ENCODE measurements at regions of chr10 and their contacts with region 1.

Region 1: DNA sequence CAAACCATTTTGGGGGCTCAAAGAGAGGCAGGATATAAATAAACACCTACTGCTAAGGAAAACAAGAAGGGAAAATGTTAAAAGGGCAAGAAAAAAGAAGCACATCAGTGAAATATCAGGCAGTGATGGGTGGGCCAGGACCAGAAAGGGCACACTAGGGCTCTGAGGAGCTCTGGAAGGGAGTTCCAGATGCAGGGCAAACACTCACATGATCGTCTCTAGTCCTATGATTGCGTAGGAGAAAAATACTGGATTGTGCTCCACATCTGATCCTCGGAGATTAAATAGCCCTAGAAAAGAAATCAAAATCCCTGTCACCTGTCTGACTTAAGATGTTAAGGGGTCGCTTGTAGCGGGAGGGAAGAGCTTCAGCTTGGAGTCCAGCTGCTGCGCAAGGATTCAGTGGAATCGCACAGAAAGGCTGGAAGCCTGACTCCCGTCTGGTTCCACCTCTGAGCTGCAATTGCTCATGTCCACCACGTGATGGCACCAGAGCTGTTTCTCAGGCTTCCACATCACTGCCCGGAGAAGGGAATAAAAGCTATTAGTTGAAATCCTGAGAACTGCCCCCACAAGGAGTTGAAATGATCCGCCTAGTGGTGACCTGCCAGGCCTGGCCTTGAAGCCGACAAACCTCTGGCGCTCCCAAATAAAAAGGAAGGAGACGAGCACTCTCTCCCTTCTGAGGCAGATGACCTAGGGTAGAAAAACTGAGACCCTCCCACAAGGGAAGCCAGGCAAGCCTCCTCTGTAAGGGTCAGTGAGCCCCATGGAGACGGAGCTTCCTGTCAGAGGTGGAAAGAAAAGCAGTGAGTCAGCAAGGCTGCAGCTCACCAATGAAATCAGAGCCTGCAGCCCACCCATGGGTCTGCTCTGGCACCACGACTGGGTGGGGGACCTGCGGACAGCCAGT is 39.2 kb downstream of the XPNPEP1 start:
- DNase-seq: peak; percentile 37 to 81 (median 76)
- H3K4me3 ChIP-seq: peak overlapping the region; percentile 19 to 65 (median 50)
- H3K27ac ChIP-seq: peak overlapping the region; percentile 28 to 94 (median 85)
- H3K27me3 ChIP-seq: no peaks in the 10 kb centered on the region
- CTCF ChIP-seq: peak; percentile 81 to 99 (median 97)

Region 2: GRCh38 chr10:109743574-109743973 is 140.5 kb before region 1 on chr10:
- intact Hi-C with region 1: no loop called
- DNase-seq: no peak
- H3K4me3 ChIP-seq: no peak overlapping the region
- H3K27ac ChIP-seq: no peak overlapping the region
- H3K27me3 ChIP-seq: no peaks in the 10 kb centered on the region
- CTCF ChIP-seq: no peak

Region 3: DNA sequence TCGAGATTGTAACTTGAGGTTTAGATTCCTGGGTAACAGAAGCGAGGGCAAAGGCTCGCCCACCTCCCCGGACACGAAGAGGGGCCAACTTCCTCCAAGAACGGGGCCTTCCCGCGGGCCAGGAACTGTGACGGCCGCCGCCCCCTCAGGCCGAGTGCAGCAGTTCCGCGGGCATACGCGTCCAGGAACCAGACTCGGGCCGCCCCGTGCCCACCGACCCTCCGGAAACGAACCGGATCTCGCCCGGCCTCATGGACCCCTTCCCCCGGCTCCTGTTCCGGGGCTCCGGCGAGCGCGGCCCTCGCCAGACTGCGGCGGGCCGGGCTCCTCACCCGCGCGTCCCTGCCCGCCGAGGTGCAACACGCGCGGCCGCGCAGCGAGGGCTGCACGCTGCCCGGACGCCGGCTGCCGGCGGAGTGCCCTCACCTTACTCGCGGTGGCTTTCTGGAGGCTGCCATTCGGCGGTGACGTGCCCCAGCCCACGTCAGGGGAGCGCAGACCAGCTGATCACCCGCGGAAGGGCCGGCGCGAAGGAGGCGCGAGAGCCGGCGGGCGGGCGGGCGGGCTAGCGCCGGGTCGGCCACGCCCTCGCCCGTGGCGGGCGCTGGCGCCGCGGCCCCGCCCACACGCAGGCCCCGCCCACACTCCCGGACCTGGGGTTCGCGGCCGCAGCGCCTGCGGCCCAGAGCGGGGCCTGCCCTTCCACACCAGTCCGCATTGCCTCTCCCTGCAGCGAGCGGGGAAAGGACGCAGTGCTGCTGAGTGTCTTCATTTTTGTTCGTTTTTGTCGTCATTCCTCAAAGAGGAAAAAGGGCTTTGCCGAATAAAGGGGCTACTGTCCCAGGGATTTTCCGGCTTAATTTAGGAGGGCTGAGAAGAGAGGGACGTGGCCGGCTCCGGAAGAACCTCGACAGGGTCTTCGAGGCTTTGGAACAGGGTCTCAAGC is 39.1 kb after region 1 on chr10 and contains the start of gene XPNPEP1:
- intact Hi-C with region 1: loop called (anchors 2 to 5 kb)
- DNase-seq: peak; percentile 79 to 94 (median 88)
- H3K4me3 ChIP-seq: peak within 1 kb of the TSS; percentile 58 to 100 (median 92)
- H3K27ac ChIP-seq: peak within 1 kb of the TSS; percentile 49 to 96 (median 92)
- H3K27me3 ChIP-seq: no peaks in the 10 kb centered on the region
- CTCF ChIP-seq: peak in 5 of 56 donors; percentile 8 to 29 (median 20)
- total RNA-seq, gene XPNPEP1: 42.7 to 96.7 (median 63.5) TPM

Region 4: DNA sequence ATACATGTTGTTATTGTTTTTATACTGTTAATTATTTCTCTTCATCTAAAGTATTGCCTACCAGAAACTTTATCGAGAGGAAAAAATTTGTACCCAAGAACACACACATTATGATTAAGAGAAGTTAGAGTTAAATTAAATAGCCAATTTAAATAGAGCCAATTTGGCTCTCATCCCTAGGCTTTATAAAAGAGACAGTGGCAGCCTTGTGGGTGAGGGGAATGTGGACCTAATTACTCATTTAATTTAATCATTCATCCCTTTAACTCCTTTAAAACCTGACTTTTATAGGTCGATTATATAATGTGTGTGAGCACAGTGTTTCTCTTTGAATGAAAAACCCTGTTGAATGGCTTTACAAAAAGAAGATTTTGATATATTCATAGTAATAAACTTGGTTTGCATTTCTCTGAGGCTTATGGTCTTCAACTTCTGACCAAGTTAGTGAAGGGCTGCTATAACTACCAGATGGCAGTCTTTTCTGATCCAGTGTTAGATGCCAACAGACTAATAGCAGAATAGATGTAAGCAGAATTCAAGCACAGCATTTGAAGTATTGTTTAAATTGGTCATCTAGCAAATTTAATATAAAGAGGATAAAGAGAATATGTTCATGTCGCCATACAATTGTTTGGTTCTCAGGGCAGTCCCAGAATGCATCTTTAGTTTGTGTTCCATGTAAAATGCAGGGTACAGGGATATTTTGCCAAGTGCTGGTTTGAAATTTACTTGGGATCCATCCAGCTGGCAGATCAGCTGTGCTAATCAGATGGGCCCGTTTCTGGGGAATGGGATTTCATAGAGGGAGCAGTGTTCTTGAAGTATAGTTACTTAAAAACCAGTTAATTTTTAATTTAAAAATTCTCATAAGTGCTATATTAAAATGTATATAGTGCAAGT is 148.9 kb after region 1 on chr10:
- intact Hi-C with region 1: loop called in 1 of 2 experiments (anchors 5 kb)
- DNase-seq: peak in 1 of 10 donors; percentile 65
- H3K4me3 ChIP-seq: peak overlapping the region in 45 of 59 donors; percentile 2 to 57 (median 26)
- H3K27ac ChIP-seq: peak overlapping the region; percentile 60 to 93 (median 84)
- H3K27me3 ChIP-seq: no peaks in the 10 kb centered on the region
- CTCF ChIP-seq: peak in 1 of 56 donors; percentile 8

Region 5: DNA sequence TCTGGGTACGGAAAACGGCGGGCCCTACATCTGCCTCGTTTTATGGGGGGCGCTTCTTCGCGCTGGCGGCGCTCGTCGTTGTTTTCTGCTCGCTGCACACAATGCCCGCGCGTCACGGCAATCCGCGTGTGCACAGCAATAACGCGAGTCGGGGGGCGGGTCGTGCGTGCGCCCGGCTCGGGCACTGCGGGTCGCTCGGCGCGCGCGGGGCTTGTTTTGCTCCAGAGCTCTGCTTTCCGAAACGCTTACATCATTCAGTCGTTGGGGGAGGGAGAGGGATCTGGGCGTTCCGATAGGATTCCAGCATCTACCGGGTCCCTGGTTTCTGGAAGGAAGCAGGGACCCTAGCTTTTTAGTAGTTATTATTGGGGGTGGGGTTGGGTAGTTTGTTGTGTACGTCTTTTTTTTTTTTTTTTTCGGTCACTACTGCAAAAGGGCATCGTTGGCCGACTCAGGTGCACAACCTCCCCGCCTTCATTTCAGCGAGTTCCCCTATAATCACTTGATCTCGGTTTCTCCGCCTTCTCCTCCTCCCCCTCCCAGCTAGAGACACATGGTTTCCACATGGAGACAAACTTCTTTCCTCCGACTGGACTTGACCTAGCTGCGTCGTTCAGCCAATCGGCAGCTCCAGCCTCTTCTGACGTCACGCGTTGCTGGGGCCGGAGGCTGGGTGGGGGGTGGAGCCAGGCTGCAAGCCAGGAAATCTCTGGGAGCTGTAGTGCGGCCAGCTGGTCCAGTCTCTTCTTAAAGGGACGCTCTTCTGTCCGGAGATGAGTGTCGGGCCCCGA is 326.8 kb after region 1 on chr10:
- intact Hi-C with region 1: loop called (anchors 5 to 10 kb)
- DNase-seq: peak; percentile 97 to 100 (median 99)
- H3K4me3 ChIP-seq: peak overlapping the region; percentile 57 to 96 (median 86)
- H3K27ac ChIP-seq: peak overlapping the region; percentile 88 to 100 (median 100)
- H3K27me3 ChIP-seq: no peaks in the 10 kb centered on the region
- CTCF ChIP-seq: peak in 12 of 56 donors; percentile 0 to 35 (median 16)

Region 6: DNA sequence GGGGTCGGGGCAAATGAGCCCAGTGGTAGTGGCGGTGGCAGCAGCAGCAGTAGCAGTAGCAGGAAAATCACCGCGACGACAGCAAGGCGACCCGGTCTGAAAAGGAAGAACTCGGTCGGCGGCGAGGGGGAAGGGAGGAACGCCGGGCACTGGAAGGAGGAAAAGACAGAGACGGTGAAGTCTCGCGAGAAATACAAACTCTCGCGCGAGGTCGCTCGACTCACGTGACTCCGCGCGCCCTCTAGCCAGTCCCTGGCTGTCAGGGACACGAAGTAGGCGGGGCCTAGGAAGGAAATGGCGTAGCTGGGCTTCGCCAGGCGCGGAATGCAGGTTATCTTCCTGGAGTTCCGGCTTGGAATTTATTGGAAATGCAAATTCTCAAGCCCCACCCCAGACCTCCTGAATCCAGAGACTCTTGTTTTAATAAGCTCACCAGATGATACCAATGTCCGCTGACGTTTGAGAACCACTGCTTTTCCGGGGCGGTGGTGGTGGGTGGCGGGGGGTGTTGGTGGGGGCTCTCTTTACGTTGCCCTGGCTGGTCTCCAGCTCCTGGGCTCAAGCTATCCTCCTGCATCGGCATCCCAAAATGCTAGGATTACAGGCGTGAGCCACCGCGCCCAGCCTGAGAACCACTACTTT is 420.8 kb after region 1 on chr10 and contains the start of gene SMNDC1:
- intact Hi-C with region 1: loop called in 1 of 2 experiments (anchors 10 kb)
- DNase-seq: peak; percentile 97 to 99 (median 98)
- H3K4me3 ChIP-seq: peak within 1 kb of the TSS; percentile 68 to 98 (median 85)
- H3K27ac ChIP-seq: peak within 1 kb of the TSS; percentile 37 to 96 (median 89)
- H3K27me3 ChIP-seq: no peaks in the 10 kb centered on the region
- CTCF ChIP-seq: peak in 37 of 56 donors; percentile 6 to 61 (median 34)
- total RNA-seq, gene SMNDC1: 17.1 to 34.9 (median 25.4) TPM

Measured in dorsolateral prefrontal cortex (tissue), 120 donors.